A549 (cell line): ENCODE measurements at regions of chr7 and their contacts with region 1.

Region 1: GRCh38 chr7:134646425-134647305 is at the start of gene BPGM:
- DNase-seq: peak; percentile 100
- ATAC-seq: peak; percentile 99 to 100
- H3K4me3 ChIP-seq: peak within 1 kb of the TSS; percentile 76
- H3K27ac ChIP-seq: peak within 1 kb of the TSS; percentile 83 to 84
- H3K4me1 ChIP-seq: peaks cover 9% of the 10 kb centered on the region; the same call in 2 of the 3 replicates
- CTCF ChIP-seq: peak; percentile 61
- EP300 ChIP-seq: no peak
- POLR2A ChIP-seq: peak; percentile 94
- RAD21 ChIP-seq: no peak
- polyA plus RNA-seq, gene BPGM: 21.2 and 28.3 TPM in 2 replicates

Region 2: DNA sequence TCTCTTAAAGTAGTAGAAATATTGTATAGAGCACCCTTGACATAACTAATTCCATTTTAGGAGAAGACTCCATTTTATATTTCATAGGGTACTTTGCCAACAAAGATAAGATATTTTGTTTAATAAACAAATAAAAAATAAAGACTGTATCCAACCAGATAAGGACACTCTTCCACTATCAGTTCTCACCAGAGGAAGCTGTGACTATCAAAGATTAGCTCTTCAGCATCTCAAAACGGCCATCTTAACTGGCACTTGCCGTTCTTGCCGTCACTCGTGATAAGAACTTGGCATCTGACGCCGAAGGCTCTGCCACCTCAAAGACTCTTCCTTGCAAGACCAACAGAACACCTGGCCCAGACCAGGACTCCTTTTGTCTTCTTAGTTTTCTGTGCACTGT is 161.5 kb before region 1 on chr7:
- CTCF ChIA-PET with region 1: no interaction called
- POLR2A ChIA-PET with region 1: no interaction called
- DNase-seq: no peak
- ATAC-seq: no peak
- H3K4me3 ChIP-seq: no peak overlapping the region
- H3K27ac ChIP-seq: no peak overlapping the region
- H3K4me1 ChIP-seq: peaks cover 31% of the 10 kb centered on the region
- CTCF ChIP-seq: no peak
- EP300 ChIP-seq: no peak
- POLR2A ChIP-seq: no peak
- RAD21 ChIP-seq: no peak

Region 3: DNA sequence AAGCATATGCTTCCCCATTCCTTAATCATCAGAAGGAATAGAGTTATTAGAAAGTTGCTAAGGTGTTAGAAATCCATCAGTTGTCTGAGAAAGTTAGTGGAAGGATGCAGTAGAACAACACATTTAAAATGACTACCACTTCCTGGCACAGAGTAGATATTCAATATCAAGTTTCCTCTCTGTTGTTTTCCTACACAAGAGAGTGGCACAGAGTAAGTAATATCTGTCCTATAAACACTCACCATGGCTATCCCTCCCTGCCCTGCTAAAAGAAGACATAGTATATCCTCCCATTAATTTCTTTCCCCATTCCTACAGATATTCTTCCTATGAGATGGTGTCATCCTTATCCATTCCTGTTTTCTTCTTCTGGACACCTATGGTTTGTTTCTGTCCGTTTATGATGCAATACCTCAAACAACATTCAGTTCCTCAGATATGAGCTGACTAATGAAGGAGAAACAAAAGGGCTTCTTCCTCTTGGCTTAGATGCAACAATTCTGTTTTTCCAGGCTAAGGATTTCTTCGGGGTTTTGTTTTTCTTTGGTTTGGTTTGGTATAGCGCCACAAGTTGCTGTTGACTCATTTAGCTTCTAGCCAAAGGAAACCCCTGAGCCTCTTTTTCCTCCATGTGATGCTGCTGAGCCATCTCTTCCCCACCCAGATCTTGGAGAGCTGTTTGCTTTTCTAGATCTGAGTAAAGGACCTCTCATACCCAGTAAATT is 32.9 kb before region 1 on chr7:
- CTCF ChIA-PET with region 1: interaction called, 3 read pairs
- POLR2A ChIA-PET with region 1: interaction called, 15 read pairs
- DNase-seq: peak; percentile 57 to 86
- ATAC-seq: peak; percentile 90 to 94
- H3K4me3 ChIP-seq: no peak overlapping the region
- H3K27ac ChIP-seq: peak overlapping the region; percentile 72 to 80
- H3K4me1 ChIP-seq: peaks cover 25% of the 10 kb centered on the region
- CTCF ChIP-seq: no peak
- EP300 ChIP-seq: peak; percentile 50 to 73; a peak in 3 of 5 replicates
- POLR2A ChIP-seq: no peak
- RAD21 ChIP-seq: peak; percentile 7 to 46; a peak in 3 of 5 replicates

Region 4: GRCh38 chr7:134619627-134620331 is 26.9 kb before region 1 on chr7:
- CTCF ChIA-PET with region 1: interaction called, 5 read pairs
- POLR2A ChIA-PET with region 1: interaction called, 15 read pairs
- DNase-seq: peak in 1 of 2 experiments; percentile 66
- ATAC-seq: peak; percentile 83 to 86
- H3K4me3 ChIP-seq: no peak overlapping the region
- H3K27ac ChIP-seq: peak overlapping the region; percentile 44 to 54; a peak in 5 of 6 replicates
- H3K4me1 ChIP-seq: peaks cover 25% of the 10 kb centered on the region
- CTCF ChIP-seq: no peak
- EP300 ChIP-seq: no peak
- POLR2A ChIP-seq: no peak
- RAD21 ChIP-seq: no peak

Region 5: DNA sequence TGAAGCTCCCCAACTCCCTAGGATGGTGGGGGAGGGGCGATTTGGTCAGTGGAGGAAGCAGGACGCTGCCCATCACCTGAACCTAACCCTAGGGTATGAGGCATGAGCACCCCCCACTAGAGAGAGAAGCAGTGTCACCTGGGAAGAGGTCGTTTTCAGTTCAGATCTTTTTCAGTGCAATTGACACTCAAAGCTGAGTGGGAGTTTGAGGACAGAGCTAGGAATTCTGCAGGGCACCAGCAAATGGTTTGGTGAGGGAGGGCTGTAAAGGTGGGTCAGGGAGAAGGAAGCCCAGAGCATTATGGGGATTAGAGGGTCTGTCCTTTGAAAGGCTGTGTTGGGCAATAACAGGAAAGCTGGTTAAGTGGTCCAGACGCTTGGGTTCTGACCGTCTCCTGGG is 10.9 kb after region 1 on chr7:
- CTCF ChIA-PET with region 1: interaction called, 24 read pairs
- POLR2A ChIA-PET with region 1: interaction called, 8 read pairs
- DNase-seq: no peak
- ATAC-seq: no peak
- H3K4me3 ChIP-seq: no peak overlapping the region
- H3K27ac ChIP-seq: no peak overlapping the region
- H3K4me1 ChIP-seq: peaks cover 10% of the 10 kb centered on the region; the same call in 1 of the 3 replicates
- CTCF ChIP-seq: no peak
- EP300 ChIP-seq: no peak
- POLR2A ChIP-seq: no peak
- RAD21 ChIP-seq: no peak